ENCODE measurements at regions of chr10 and their contacts with region 1.

Region 1: DNA sequence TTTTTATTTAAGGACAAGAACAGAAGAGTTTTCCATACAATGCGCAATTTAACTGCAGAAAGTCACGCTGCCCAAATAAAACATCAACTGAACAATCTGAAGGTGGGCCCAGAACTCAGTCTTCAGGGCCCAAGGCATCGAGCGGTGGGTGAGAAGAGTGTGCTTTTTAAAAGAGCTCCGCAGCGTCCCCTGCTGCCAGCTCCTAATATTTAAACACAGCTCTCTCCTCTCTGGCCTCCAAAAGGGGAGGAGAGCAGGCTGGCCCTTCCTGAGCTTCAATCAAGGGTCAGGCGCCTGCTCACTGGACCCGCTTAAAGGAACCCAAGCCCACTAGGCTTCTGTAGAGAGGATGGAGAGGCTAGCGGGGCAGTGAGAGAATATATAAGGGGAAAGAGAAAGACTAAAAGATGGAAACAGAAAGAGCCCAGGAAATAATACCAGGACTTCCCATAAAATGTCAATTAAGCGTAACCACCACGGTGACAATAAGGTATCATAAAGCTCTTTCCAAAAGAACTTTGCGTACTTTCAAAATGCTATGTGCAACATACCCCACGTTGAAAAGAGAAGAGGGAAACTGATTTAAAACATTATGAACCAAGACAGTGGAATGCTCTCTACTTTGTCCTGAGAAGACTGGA is 2.8 kb downstream of the FAM53B start:
- DNase-seq: peak; percentile 84
- H3K4me3 ChIP-seq: no peak overlapping the region
- H3K27ac ChIP-seq: no peak overlapping the region; a peak in 1 of 4 replicates
- H3K4me1 ChIP-seq: peaks cover 12 to 52% of the 10 kb centered on the region in 2 experiments; a peak in 2 of 4 replicates
- H3K27me3 ChIP-seq: no peaks in the 10 kb centered on the region
- CTCF ChIP-seq: peak; percentile 84
- EP300 ChIP-seq: no peak
- RAD21 ChIP-seq: peak; percentile 83

Region 2: DNA sequence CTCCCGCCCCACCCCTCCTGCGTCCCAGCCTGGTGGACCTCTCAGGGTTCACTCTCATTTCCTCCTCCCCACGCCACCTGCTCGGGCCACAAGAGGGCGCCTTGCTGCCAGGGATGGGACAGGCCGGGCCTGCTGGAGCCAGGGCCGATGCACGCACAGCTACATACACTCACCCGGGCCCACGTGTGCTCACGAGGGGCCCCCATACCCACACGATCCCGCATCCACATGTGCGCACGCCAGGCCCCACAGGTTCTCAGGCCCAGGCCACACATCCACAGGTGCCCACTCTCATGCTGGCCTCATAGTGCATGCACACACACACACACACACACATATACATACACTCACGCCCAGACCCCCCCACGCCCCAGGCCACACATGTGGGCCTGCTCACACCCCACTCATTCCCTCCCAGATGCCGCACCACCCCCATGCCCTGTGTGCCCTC is 211.2 kb before region 1 on chr10:
- CTCF ChIA-PET with region 1: interaction called, 192 read pairs
- POLR2A ChIA-PET with region 1: interaction called, 3 read pairs
- DNase-seq: peak; percentile 98
- H3K4me3 ChIP-seq: no peak overlapping the region; a peak in 1 of 4 replicates
- H3K27ac ChIP-seq: no peak overlapping the region
- H3K4me1 ChIP-seq: peaks cover 0 to 15% of the 10 kb centered on the region in 2 experiments; a peak in 1 of 4 replicates
- H3K27me3 ChIP-seq: no peaks in the 10 kb centered on the region
- CTCF ChIP-seq: peak; percentile 83
- EP300 ChIP-seq: no peak
- RAD21 ChIP-seq: peak; percentile 92

Region 3: DNA sequence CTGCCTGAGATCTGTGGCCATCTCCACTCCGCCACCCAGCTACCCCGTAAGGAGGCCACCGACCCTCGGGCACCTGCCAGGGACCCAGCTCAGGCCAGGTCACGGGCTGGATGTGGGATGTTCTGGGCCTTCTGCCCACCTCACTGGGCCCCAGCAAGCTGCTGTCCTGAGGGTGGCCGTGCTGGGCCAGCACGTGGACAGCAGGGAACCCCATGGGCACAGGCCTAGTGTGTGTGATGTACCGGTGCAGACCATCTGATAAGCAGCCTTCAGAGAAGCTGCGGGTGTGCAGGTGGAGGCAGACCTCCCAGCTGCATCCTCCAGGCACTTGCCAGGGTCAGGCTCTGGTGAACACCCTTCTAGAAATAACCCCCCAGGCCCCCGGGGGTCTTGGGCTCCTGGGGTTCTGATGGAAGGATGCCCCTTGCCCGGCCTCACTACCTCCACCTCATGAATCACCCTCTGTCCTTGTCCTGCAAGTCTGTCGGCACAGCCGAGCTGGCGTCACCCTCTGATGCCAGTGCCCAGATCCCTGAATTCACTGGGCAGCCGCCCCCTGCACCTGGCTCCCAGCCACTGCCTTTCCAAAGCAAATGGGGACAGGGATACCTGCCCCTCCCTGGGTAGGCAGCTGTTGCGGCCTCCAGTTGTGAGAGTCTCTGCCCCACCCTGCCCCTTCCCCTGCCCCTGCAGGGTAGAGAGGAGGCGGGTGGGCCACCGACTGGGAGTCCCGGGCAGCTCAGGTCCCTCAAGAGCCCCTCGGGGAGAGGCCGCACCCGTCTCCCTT is 137.0 kb before region 1 on chr10:
- CTCF ChIA-PET with region 1: interaction called, 15 read pairs
- POLR2A ChIA-PET with region 1: no interaction called
- DNase-seq: peak; percentile 61
- H3K4me3 ChIP-seq: no peak overlapping the region
- H3K27ac ChIP-seq: no peak overlapping the region; a peak in 1 of 4 replicates
- H3K4me1 ChIP-seq: peaks cover 0 to 13% of the 10 kb centered on the region in 2 experiments; a peak in 1 of 4 replicates
- H3K27me3 ChIP-seq: no peaks in the 10 kb centered on the region
- CTCF ChIP-seq: no peak
- EP300 ChIP-seq: no peak
- RAD21 ChIP-seq: no peak

Region 4: GRCh38 chr10:124671486-124672075 is 69.8 kb before region 1 on chr10:
- CTCF ChIA-PET with region 1: interaction called, 28 read pairs
- POLR2A ChIA-PET with region 1: interaction called, 4 read pairs
- DNase-seq: peak; percentile 74
- H3K4me3 ChIP-seq: no peak overlapping the region
- H3K27ac ChIP-seq: peak overlapping the region in 1 of 2 experiments; percentile 45; a peak in 2 of 4 replicates
- H3K4me1 ChIP-seq: peaks cover 0 to 66% of the 10 kb centered on the region in 2 experiments; a peak in 3 of 4 replicates
- H3K27me3 ChIP-seq: no peaks in the 10 kb centered on the region
- CTCF ChIP-seq: 0 out of 2 replicates have a peak, but pooled peaks have one; percentile 11
- EP300 ChIP-seq: no peak
- RAD21 ChIP-seq: 0 out of 2 replicates have a peak, but pooled peaks have one; percentile 25

Region 5: GRCh38 chr10:124719213-124719851 is 22.1 kb before region 1 on chr10:
- CTCF ChIA-PET with region 1: interaction called, 16 read pairs
- POLR2A ChIA-PET with region 1: no interaction called
- DNase-seq: no peak
- H3K4me3 ChIP-seq: no peak overlapping the region
- H3K27ac ChIP-seq: no peak overlapping the region
- H3K4me1 ChIP-seq: peaks cover 6 to 18% of the 10 kb centered on the region in 2 experiments; a peak in 2 of 4 replicates
- H3K27me3 ChIP-seq: no peaks in the 10 kb centered on the region
- CTCF ChIP-seq: no peak
- EP300 ChIP-seq: no peak
- RAD21 ChIP-seq: peak; percentile 34; the same call in 1 of the 2 replicates

Region 6: DNA sequence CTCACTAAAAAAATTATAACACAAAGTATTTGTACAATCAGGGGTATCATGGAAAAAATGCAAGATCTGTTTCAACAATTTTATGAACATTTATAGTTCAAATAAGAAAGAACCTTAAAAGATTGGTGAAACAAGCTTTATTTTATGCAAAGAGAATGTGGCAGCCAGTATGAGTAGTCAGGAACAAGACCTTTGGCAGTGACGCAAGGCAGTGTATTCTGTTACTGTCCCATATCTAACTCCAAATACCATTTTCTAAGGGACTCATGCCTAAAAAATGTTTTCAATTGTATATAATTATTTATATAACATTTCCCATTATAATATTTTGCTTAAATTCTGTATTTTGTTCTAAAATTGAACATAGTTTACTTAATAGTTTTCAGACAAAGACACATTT is 21.9 kb after region 1 on chr10:
- CTCF ChIA-PET with region 1: interaction called, 16 read pairs
- POLR2A ChIA-PET with region 1: no interaction called
- DNase-seq: no peak
- H3K4me3 ChIP-seq: no peak overlapping the region
- H3K27ac ChIP-seq: peak overlapping the region in 1 of 2 experiments; percentile 60; a peak in 3 of 4 replicates
- H3K4me1 ChIP-seq: peaks cover 0 to 8% of the 10 kb centered on the region in 2 experiments; a peak in 1 of 4 replicates
- H3K27me3 ChIP-seq: no peaks in the 10 kb centered on the region
- CTCF ChIP-seq: no peak
- EP300 ChIP-seq: no peak
- RAD21 ChIP-seq: no peak